GM18951 (cell line): ENCODE measurements at regions of chr5 and their contacts with region 1.

Region 1: DNA sequence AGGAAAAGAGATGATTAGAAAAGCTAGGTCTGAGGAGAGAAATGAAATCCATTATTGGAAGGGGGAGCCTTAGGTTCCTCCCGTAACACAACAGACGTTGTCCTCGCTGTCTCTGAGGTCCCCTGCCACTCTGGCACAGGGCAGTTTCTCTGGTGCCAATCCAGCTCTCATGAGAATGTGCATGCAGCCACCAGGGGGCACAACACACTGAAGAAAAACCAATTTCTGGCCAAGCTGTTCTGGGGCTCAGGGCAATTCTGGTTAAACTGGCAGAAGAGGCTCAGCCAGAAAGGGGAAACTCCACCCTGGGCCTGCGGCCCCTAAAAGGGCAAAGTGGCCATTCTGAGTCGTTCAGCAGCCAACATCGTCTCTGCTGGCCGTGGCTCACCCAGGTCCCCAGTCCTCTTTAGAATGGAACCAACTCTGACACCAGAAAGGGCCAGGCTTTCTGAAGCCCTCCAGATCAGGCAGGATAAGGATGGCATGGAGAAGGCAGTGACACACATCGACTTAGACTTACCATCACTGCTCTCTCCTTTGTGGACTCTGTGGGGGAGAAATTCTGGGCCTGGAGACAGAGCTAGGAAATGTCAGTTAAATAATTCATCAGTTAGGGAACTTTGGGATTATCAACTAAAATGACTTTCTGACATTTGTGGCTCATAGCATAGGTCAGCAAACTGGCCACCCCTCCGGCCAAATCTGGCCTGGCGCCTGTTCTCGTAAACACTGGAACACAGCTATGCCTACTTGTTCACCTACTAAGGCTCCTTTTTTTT is 58.5 kb upstream of the GOLPH3 start:
- POLR2A ChIP-seq: no peak

Region 2: GRCh38 chr5:32329308-32329834 is 96.7 kb after region 1 on chr5:
- in situ Hi-C with region 1: loop called (anchors 10 kb)
- POLR2A ChIP-seq: no peak

Region 3: DNA sequence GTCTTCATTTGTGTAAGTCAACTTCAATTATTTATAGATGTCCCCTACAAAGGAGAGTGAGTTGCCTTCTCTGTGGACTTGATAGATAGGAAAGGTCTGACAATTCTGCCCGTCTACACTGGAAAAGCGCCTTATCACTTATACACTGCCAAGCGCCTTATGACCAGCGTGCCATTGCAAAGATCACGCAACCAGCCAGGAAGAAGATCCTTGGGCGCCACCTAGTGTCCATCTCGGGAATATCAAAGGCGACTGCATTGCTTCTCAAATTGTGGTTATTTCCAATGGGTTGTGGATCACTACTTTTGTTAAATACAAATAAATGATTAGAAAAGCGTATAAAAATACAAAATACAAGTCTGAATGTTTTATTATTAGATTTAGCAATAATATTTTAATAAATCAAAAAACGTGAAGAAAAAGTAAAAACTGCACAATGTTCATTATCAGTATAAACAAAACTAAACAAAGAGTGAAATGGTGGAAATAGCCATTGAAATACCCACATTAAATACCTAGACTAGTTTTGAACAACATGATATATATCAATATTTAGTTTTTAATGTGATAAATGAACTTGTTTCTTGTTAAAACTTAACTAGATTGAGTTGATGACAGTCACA is 380.5 kb after region 1 on chr5:
- in situ Hi-C with region 1: loop called (anchors 25 kb)
- POLR2A ChIP-seq: no peak